ENCODE measurements at regions of chr2 and their contacts with region 1.

Region 1: GRCh38 chr2:55768991-55769390 is 75.3 kb upstream of the PNPT1 start:
- DNase-seq: no peak
- H3K4me3 ChIP-seq: no peak overlapping the region
- H3K27ac ChIP-seq: no peak overlapping the region
- H3K4me1 ChIP-seq: no peaks in the 10 kb centered on the region
- H3K27me3 ChIP-seq: no peaks in the 10 kb centered on the region
- CTCF ChIP-seq: no peak
- EP300 ChIP-seq: no peak
- POLR2A ChIP-seq: no peak

Region 2: GRCh38 chr2:55693181-55694134 is 75.5 kb before region 1 on chr2 and contains the start of gene PNPT1:
- intact Hi-C with region 1: no loop called
- DNase-seq: peak; percentile 98
- H3K4me3 ChIP-seq: peak within 1 kb of the TSS; percentile 65 to 80 (median 70)
- H3K27ac ChIP-seq: peak within 1 kb of the TSS; percentile 10 to 72 (median 46)
- H3K4me1 ChIP-seq: peaks cover 4 to 16% (median 10%) of the 10 kb centered on the region in 4 donors
- H3K27me3 ChIP-seq: no peaks in the 10 kb centered on the region
- CTCF ChIP-seq: peak in 1 of 3 experiments; percentile 16
- EP300 ChIP-seq: no peak
- POLR2A ChIP-seq: no peak
- total RNA-seq, gene PNPT1: 13.1 to 17.2 (median 15.6) TPM

Region 3: GRCh38 chr2:55966401-55967118 is 197.6 kb after region 1 on chr2:
- intact Hi-C with region 1: loop called (anchors 5 kb)
- DNase-seq: no peak
- H3K4me3 ChIP-seq: no peak overlapping the region
- H3K27ac ChIP-seq: peak overlapping the region; percentile 38 to 60 (median 46)
- H3K4me1 ChIP-seq: peaks cover 0 to 14% (median 0%) of the 10 kb centered on the region in 4 donors
- H3K27me3 ChIP-seq: no peaks in the 10 kb centered on the region
- CTCF ChIP-seq: no peak
- EP300 ChIP-seq: no peak
- POLR2A ChIP-seq: no peak

Measured in esophagus muscularis mucosa (tissue), 4 donors.